Endothelial cell of umbilical vein (primary cell): ENCODE measurements at regions of chr18 and their contacts with region 1.

Region 1: DNA sequence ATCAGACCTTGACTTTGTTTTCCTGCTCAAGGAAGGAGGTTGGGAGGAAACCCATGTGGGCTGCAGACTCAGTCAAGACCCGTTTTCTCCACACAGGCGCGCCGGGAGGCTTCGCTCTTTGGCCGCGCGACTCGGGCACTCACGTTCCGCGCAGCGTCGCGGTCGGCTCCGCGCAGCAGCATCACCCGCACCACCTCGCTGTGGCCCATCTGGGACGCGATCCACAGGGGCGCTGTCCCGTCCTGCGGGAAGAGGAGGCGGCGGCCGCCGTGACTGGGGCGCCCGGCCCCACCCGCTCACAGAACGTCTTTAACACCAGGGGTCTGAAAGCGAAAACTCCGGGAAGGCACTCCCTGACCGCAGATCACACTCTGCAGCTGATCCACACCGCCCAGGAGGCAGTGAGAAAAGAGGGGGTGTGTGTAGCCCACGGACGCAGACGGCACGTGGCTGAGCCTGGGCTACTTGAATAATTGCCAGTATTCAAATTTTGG is 33.1 kb upstream of the NPC1 start:
- DNase-seq: peak; percentile 20
- H3K4me3 ChIP-seq: peak overlapping the region in 2 of 3 experiments; percentile 37 to 48
- H3K27ac ChIP-seq: no peak overlapping the region
- H3K4me1 ChIP-seq: peaks cover 6% of the 10 kb centered on the region
- H3K27me3 ChIP-seq: peaks cover 4 to 11% of the 10 kb centered on the region in 2 experiments
- CTCF ChIP-seq: peak in 1 of 2 donors; percentile 10
- POLR2A ChIP-seq: no peak

Region 2: GRCh38 chr18:23183411-23184155 is 435.9 kb before region 1 on chr18:
- CTCF ChIA-PET with region 1: no interaction called
- POLR2A ChIA-PET with region 1: no interaction called
- dilution Hi-C with region 1: no loop called
- intact Hi-C with region 1: no loop called
- DNase-seq: no peak
- H3K4me3 ChIP-seq: no peak overlapping the region
- H3K27ac ChIP-seq: no peak overlapping the region
- H3K4me1 ChIP-seq: peaks cover 23% of the 10 kb centered on the region
- H3K27me3 ChIP-seq: no peaks in the 10 kb centered on the region
- CTCF ChIP-seq: no peak
- POLR2A ChIP-seq: no peak

Region 3: DNA sequence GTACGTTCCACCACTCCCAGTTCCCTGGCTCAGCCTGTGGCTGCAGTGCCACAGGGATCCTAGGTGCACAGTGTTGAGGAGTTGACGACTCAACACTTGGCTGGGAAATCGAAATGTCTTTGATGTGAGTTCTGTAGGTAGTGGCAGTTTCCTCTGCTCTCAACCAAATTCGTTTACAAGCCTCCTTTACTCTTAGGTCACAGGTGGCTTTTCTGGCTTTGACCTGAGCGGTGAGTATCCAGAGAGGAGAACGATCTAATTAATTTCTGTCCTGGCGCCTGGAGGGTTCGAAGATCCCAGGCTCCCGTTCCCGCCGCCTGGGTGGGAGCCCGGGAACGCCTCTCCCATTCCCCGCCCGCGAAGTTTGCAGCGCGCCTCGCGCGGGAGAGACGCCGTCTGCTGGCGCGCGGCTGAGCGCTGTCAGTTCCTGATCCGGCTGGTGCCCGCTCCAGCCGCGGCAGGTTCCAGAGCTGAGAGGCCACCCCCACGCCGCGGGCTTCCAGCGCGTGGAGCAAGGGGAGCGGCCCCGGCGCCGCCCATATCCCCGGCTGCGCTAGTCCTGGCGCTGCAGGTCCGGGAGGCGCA is 69.7 kb after region 1 on chr18 and contains the start of gene LAMA3:
- CTCF ChIA-PET with region 1: interaction called, 13 read pairs
- POLR2A ChIA-PET with region 1: no interaction called
- dilution Hi-C with region 1: no loop called
- intact Hi-C with region 1: no loop called
- DNase-seq: peak; percentile 53
- H3K4me3 ChIP-seq: peak within 1 kb of the TSS; percentile 36 to 76 (median 50)
- H3K27ac ChIP-seq: no peak within 1 kb of the TSS
- H3K4me1 ChIP-seq: peaks cover 13% of the 10 kb centered on the region
- H3K27me3 ChIP-seq: no peaks in the 10 kb centered on the region
- CTCF ChIP-seq: peak; percentile 7 to 33
- POLR2A ChIP-seq: no peak
- total RNA-seq, gene LAMA3: 7.1 and 12.3 TPM in 2 replicates

Region 4: DNA sequence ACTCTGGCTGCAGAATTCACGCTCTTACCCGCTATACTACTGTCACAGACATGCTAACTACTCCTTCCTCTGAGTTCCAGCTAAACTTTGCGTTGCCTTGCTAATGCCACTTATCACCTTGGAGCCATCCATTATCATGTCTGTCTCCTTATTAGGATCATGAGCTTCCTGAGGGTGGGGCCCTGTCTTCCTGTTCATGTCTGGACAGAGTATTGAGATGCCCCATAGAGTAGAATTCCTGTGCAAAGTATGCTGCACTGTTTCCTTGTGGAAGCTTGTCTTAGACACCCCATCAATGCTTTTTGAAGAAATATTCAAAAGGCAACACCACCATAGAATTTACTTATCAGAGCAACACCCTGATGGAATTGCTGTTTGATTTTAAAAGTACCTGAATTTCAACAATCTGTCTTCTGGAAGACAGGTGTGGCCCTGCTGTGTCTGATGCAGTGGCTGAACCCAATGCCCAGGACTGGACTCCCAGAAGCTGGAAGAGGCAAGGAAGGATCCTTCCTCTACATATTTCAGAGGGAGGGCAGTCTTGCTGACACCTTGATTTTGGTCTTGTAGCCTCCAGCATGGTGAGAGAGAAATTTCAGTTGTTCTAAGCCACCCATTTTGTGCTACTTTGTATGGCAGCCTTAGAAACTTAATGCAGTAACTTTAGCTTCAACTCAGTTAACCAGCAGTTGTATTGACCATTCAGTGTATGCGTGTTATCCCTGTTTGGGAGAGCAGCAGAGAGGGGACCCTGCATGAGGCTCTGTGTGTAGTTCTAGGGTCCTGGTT is 75.4 kb after region 1 on chr18:
- CTCF ChIA-PET with region 1: interaction called, 260 read pairs
- POLR2A ChIA-PET with region 1: no interaction called
- dilution Hi-C with region 1: no loop called
- intact Hi-C with region 1: no loop called
- DNase-seq: no peak
- H3K4me3 ChIP-seq: no peak overlapping the region
- H3K27ac ChIP-seq: peak overlapping the region; percentile 35
- H3K4me1 ChIP-seq: peaks cover 16% of the 10 kb centered on the region
- H3K27me3 ChIP-seq: no peaks in the 10 kb centered on the region
- CTCF ChIP-seq: no peak
- POLR2A ChIP-seq: no peak

Region 5: DNA sequence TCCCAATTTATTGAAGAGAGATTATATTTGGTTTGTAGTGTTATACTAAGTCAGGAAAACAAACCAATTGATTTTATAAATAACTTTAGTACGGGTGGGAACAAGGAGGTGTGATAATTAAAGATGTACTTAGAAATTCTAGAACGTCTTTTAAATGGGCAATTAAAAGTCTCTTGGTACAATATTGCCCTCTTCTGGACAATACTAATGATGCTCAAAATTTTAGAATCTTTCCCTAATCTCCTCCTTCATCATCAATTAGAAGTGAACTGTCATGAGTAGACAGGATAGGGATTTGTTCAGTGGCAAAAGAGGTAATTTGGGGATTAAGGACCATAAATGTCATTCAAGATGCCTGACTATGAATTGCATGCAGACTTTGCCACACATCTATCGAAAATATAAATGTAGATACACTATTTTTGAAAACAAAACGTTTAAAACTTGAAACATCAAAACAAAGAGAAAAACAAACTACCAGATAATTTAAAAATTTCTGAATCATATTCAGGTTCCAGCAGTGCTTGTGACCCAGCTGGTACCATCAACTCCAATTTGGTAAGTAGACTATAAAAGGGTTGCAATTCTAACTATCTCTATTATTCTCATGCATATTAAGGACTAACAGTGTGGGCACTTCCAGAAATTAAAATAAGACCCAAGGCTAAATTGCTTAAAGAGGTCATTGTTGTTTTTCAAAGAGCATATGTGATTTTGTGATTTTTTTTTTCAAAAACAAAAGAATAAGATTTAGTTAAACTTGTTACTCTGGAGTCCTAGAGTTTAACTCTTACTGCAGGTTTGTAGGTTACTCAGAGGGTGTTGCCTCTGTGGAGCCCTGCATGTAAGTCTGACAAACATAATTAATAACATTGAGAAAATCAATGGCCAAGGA is 193.4 kb after region 1 on chr18:
- CTCF ChIA-PET with region 1: interaction called, 18 read pairs
- POLR2A ChIA-PET with region 1: no interaction called
- dilution Hi-C with region 1: no loop called
- intact Hi-C with region 1: loop called (anchors 1 kb)
- DNase-seq: peak; percentile 58
- H3K4me3 ChIP-seq: no peak overlapping the region
- H3K27ac ChIP-seq: no peak overlapping the region
- H3K4me1 ChIP-seq: no peaks in the 10 kb centered on the region
- H3K27me3 ChIP-seq: no peaks in the 10 kb centered on the region
- CTCF ChIP-seq: peak; percentile 21 to 30
- POLR2A ChIP-seq: no peak

Region 6: GRCh38 chr18:24118750-24119577 is 499.5 kb after region 1 on chr18:
- CTCF ChIA-PET with region 1: interaction called, 3 read pairs
- POLR2A ChIA-PET with region 1: no interaction called
- dilution Hi-C with region 1: loop called (anchors 25 kb)
- intact Hi-C with region 1: loop called (anchors 1 kb)
- DNase-seq: peak; percentile 81
- H3K4me3 ChIP-seq: no peak overlapping the region
- H3K27ac ChIP-seq: no peak overlapping the region
- H3K4me1 ChIP-seq: no peaks in the 10 kb centered on the region
- H3K27me3 ChIP-seq: no peaks in the 10 kb centered on the region
- CTCF ChIP-seq: peak; percentile 66 to 74
- POLR2A ChIP-seq: no peak